A673 (cell line): ENCODE measurements at regions of chr12 and their contacts with region 1.

Region 1: GRCh38 chr12:50825372-50825838 is 17.3 kb upstream of the TMPRSS12 start:
- DNase-seq: peak; percentile 77
- H3K4me3 ChIP-seq: no peak overlapping the region
- H3K27ac ChIP-seq: peak overlapping the region; percentile 54
- H3K4me1 ChIP-seq: no peaks in the 10 kb centered on the region
- H3K27me3 ChIP-seq: no peaks in the 10 kb centered on the region
- CTCF ChIP-seq: peak; percentile 63

Region 2: GRCh38 chr12:50986966-50987737 is 161.7 kb after region 1 on chr12:
- CTCF ChIA-PET with region 1: interaction called, 21 read pairs
- POLR2A ChIA-PET with region 1: no interaction called
- intact Hi-C with region 1: loop called (anchors 1 kb)
- DNase-seq: peak; percentile 53
- H3K4me3 ChIP-seq: no peak overlapping the region
- H3K27ac ChIP-seq: no peak overlapping the region
- H3K4me1 ChIP-seq: no peaks in the 10 kb centered on the region
- H3K27me3 ChIP-seq: no peaks in the 10 kb centered on the region
- CTCF ChIP-seq: peak; percentile 66

Region 3: GRCh38 chr12:51025836-51026638 is 200.6 kb after region 1 on chr12 and contains the start of gene SLC11A2:
- CTCF ChIA-PET with region 1: interaction called, 21 read pairs
- POLR2A ChIA-PET with region 1: no interaction called
- intact Hi-C with region 1: no loop called
- DNase-seq: peak; percentile 97
- H3K4me3 ChIP-seq: peak within 1 kb of the TSS; percentile 92
- H3K27ac ChIP-seq: peak within 1 kb of the TSS; percentile 74
- H3K4me1 ChIP-seq: peaks cover 8% of the 10 kb centered on the region
- H3K27me3 ChIP-seq: no peaks in the 10 kb centered on the region
- CTCF ChIP-seq: no peak
- total RNA-seq, gene SLC11A2: 33.9 and 47.6 TPM in 2 replicates